H1 (cell line): ENCODE measurements at regions of chr9 and their contacts with region 1.

Region 1: GRCh38 chr9:72931437-72931836 is 21.4 kb downstream of the ALDH1A1 start:
- DNase-seq: no peak
- H3K4me3 ChIP-seq: no peak overlapping the region
- H3K27ac ChIP-seq: no peak overlapping the region
- H3K4me1 ChIP-seq: no peaks in the 10 kb centered on the region
- H3K27me3 ChIP-seq: no peaks in the 10 kb centered on the region
- CTCF ChIP-seq: no peak
- EP300 ChIP-seq: no peak
- POLR2A ChIP-seq: no peak
- RAD21 ChIP-seq: no peak

Region 2: DNA sequence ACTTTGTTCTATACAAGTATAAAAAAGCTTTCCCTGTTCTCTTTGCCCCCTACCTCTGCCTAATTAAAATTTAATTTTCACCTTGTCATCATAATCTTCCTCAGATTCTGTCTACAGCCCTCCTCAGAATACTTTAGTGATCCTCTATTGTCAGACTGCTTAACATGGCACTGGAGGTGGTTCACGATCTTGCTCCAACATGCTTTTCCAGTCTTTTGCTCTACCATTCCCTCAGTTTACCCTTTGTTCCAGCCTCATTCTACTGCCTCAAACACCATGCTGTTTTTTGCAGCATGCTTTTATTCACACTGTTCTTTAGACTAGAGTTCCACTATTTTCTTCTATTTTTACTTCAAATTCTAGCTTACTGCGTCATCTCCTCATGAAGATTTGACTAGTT is 11.0 kb after region 1 on chr9:
- CTCF ChIA-PET with region 1: interaction called, 32 read pairs
- POLR2A ChIA-PET with region 1: no interaction called
- DNase-seq: no peak
- H3K4me3 ChIP-seq: no peak overlapping the region
- H3K27ac ChIP-seq: no peak overlapping the region
- H3K4me1 ChIP-seq: no peaks in the 10 kb centered on the region
- H3K27me3 ChIP-seq: no peaks in the 10 kb centered on the region
- CTCF ChIP-seq: no peak
- EP300 ChIP-seq: no peak
- POLR2A ChIP-seq: no peak
- RAD21 ChIP-seq: no peak

Region 3: GRCh38 chr9:72952914-72953313 is 21.5 kb after region 1 on chr9 and contains the start of gene ALDH1A1:
- CTCF ChIA-PET with region 1: interaction called, 32 read pairs
- POLR2A ChIA-PET with region 1: no interaction called
- DNase-seq: no peak
- H3K4me3 ChIP-seq: no peak within 1 kb of the TSS
- H3K27ac ChIP-seq: no peak within 1 kb of the TSS
- H3K4me1 ChIP-seq: peaks cover 0 to 3% (median 0%) of the 10 kb centered on the region in 4 experiments; a peak in 1 of 7 replicates
- H3K27me3 ChIP-seq: no peaks in the 10 kb centered on the region
- CTCF ChIP-seq: no peak
- EP300 ChIP-seq: no peak
- POLR2A ChIP-seq: no peak
- RAD21 ChIP-seq: no peak
- total RNA-seq, gene ALDH1A1: 0.82 and 1.1 TPM in 2 replicates